ENCODE measurements at regions of chr17 and their contacts with region 1.

Region 1: DNA sequence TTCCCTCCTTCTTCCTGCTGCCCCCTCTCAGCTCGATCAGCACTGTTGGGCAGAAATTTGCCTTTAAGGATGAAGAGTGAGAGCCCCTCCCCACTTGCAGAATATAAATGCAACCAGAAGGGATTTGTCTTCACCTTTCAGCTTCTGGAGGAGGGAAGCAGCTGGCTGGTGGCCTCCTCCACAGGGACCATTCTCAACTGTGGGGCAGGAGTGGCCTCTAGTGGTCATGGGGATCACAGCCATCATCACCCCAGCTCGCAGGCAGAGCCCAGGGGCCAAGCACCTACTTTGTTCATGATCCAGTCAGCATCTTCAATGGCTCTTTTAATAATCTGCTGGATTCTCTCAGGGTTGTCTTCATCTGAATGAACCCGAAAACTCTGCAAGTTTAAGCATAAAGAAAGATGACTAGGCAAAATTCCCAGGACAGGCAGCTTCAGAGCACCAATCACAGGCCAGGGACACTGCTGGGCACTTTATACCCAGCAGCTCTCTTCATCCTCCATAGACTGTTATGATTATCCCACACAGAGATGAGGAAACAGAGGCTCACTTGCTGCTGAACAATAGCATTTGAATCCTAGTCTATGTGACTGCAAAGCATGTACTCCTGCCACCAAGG is 13.1 kb downstream of the LYRM9 start:
- DNase-seq: peak; percentile 84
- H3K4me3 ChIP-seq: no peak overlapping the region
- H3K27ac ChIP-seq: no peak overlapping the region
- H3K4me1 ChIP-seq: peaks cover 0 to 9% (median 0%) of the 10 kb centered on the region in 4 donors
- H3K27me3 ChIP-seq: no peaks in the 10 kb centered on the region
- CTCF ChIP-seq: peak; percentile 64 to 86 (median 77)
- EP300 ChIP-seq: no peak
- POLR2A ChIP-seq: no peak

Region 2: DNA sequence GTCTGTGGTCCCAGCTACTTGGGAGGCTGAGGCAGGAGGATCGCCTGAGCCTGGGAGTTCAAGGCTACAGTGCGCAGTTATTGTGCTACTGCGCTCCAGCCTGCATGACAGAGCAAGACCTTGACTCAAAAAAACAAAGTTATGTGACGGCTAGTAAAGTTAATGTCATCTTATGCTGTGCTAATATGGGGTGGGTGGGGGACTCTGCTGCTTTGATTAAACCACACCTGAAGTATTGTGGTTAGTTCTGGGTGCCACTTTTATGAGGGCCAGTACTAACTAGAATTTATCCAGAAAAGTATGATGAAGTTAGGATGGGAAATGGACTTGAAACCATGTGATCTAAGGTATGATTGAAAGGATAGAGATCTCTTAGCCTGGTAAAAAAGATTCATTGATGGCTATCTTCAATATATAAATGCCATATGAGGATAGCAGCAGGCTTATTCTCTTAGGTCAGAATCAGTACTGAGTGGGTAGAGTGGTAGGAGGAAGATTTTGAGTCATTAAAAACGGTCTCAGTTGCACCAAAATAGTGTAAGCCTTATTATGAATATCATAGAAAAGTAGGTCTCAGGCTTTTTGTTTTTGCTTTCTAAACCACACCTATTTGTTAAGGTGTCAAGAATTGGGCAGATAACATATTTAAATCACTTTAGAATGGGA is 580.6 kb before region 1 on chr17:
- in situ Hi-C with region 1: no loop called
- intact Hi-C with region 1: no loop called
- DNase-seq: no peak
- H3K4me3 ChIP-seq: no peak overlapping the region
- H3K27ac ChIP-seq: peak overlapping the region; percentile 0 to 18 (median 8)
- H3K4me1 ChIP-seq: peaks cover 36 to 82% (median 43%) of the 10 kb centered on the region in 4 donors
- H3K27me3 ChIP-seq: no peaks in the 10 kb centered on the region
- CTCF ChIP-seq: no peak
- EP300 ChIP-seq: no peak
- POLR2A ChIP-seq: no peak

Region 3: DNA sequence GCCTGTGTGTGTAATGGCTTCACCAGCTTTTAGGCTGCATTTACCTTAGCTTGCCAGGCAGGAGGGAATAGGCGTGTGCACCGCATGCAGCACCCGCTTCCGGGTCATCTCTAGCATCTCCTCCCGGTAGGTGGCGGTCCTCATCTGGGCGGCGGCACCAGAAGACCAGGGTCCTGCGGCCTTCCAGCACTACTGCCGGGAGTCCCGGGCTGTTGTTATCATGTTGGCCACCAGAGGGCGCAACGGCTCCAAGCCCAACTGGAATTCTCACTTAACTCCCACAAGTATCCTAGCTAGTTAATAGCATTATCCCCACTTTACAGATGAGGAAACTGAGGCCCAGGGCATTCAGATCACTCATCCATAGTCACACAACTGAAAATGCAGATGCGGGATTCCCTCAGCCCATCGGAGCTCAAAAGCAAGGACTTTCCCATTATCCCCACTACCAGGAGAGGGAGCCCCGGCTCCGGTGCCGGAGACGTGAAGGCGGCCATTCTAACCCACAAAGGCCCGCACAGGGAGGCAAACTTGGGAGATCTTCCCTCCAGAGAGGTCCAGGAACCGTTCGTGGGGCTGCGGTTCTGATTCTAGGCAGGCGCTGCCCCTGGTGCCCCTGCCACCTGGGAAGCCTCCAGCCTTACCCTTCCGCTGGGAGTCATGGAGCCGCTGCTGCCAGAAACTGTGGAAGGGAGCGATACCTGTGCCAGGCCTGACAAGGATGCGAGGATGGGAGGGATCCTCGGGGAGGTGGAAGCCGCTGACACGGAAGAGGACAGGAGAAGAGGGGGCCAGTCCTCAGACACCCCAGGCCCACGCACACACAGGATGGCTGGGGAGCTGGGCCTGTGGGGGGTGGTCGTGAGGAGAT is 225.2 kb before region 1 on chr17:
- in situ Hi-C with region 1: loop called in 1 of 4 experiments (anchors 5 kb)
- intact Hi-C with region 1: no loop called
- DNase-seq: peak; percentile 79
- H3K4me3 ChIP-seq: no peak overlapping the region
- H3K27ac ChIP-seq: no peak overlapping the region
- H3K4me1 ChIP-seq: no peaks in the 10 kb centered on the region
- H3K27me3 ChIP-seq: no peaks in the 10 kb centered on the region
- CTCF ChIP-seq: peak; percentile 90 to 97 (median 94)
- EP300 ChIP-seq: no peak
- POLR2A ChIP-seq: no peak

Region 4: GRCh38 chr17:27760069-27760885 is 119.8 kb before region 1 on chr17:
- in situ Hi-C with region 1: loop called in 1 of 4 experiments (anchors 10 kb)
- intact Hi-C with region 1: no loop called
- DNase-seq: peak; percentile 69
- H3K4me3 ChIP-seq: no peak overlapping the region
- H3K27ac ChIP-seq: no peak overlapping the region
- H3K4me1 ChIP-seq: no peaks in the 10 kb centered on the region
- H3K27me3 ChIP-seq: no peaks in the 10 kb centered on the region
- CTCF ChIP-seq: peak; percentile 83 to 94 (median 90)
- EP300 ChIP-seq: no peak
- POLR2A ChIP-seq: no peak

Region 5: DNA sequence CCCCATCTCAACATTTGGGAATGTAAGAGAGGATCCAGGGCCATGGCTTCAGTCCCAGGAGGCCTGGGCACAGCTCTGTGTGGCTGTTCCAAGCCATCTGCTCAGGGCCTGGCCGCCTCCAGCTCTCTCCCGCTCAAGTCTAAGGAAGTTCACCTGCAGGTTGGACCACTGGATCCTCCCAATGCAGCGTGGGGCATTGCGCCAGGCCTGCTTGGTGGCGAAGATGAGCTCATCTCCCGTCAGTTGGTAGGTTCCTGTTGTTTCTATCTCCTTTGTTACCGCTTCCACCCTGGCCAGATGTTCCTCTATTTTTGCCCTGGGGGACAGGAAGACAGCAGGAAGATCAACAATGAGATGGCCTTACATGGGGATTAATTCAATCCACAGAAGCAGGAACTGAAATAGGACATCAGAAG is 97.3 kb before region 1 on chr17:
- in situ Hi-C with region 1: loop called in 1 of 4 experiments (anchors 10 kb)
- intact Hi-C with region 1: no loop called
- DNase-seq: no peak
- H3K4me3 ChIP-seq: no peak overlapping the region
- H3K27ac ChIP-seq: no peak overlapping the region
- H3K4me1 ChIP-seq: no peaks in the 10 kb centered on the region
- H3K27me3 ChIP-seq: no peaks in the 10 kb centered on the region
- CTCF ChIP-seq: no peak
- EP300 ChIP-seq: no peak
- POLR2A ChIP-seq: no peak

Region 6: DNA sequence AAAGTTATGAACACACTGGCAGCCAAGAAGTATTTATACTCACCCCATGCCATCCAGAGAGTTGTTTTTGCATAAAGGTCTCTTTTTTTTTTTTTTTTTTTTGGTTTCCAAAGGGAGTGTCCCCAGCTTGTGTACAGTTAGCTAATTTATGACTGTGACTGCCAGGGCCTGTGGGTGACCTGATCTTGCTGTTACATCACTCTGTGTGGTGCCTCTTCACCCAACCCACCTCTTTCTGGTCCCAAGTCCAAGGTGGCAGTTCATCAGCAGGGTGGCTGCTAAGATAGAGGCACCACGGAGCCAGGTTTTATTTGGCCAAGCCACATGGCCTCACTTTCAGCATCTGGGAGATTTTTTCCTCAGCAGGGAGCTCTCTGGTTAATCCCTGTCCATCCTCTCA is 79.6 kb before region 1 on chr17 and contains the start of gene NOS2:
- in situ Hi-C with region 1: loop called in 3 of 4 experiments (anchors 10 kb)
- intact Hi-C with region 1: loop called (anchors 5 kb)
- DNase-seq: peak; percentile 50
- H3K4me3 ChIP-seq: no peak within 1 kb of the TSS
- H3K27ac ChIP-seq: peak within 1 kb of the TSS in 3 of 4 donors; percentile 7 to 39 (median 21)
- H3K4me1 ChIP-seq: peaks cover 0 to 8% (median 0%) of the 10 kb centered on the region in 4 donors
- H3K27me3 ChIP-seq: peaks cover 7% of the 10 kb centered on the region
- CTCF ChIP-seq: no peak
- EP300 ChIP-seq: no peak
- POLR2A ChIP-seq: no peak
- total RNA-seq, gene NOS2: 0.40 to 20.3 (median 2.2) TPM

Region 7: DNA sequence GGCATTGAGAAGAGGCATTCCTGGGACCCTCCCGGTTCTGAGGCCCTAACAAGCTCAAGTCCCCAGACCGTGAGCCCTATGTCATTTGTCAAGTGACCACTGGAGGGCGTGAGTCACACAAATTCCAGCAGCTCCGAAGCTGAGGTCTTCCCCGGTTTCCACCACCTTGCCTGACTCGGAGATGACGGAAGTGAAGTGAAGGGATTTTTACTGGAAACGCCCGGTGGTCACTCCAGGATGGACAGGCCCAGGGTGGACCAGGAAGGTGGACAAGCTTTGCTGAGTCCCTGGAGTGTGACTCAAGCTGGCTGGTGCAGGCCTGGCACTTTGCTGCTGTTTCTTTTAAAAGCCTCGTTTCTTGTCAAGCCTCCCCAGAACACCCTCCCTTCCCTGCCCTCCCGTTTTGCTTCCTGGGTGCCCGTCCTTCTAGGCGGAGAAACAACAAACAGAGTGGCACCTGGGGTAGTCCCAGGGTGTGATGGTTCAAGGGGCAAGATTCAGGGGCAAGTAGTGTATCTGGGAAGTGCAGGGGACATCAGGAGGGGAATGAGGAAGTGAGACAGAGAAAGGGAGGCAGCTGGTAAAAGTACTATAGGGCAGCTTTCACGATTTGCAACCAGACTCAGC is 74.5 kb before region 1 on chr17:
- in situ Hi-C with region 1: loop called in 3 of 4 experiments (anchors 10 kb)
- intact Hi-C with region 1: loop called (anchors 5 kb)
- DNase-seq: peak; percentile 89
- H3K4me3 ChIP-seq: peak overlapping the region in 2 of 4 donors; percentile 12 to 35
- H3K27ac ChIP-seq: peak overlapping the region; percentile 46 to 60 (median 58)
- H3K4me1 ChIP-seq: peaks cover 5 to 34% (median 19%) of the 10 kb centered on the region in 4 donors
- H3K27me3 ChIP-seq: no peaks in the 10 kb centered on the region
- CTCF ChIP-seq: peak; percentile 82 to 96 (median 85)
- EP300 ChIP-seq: no peak
- POLR2A ChIP-seq: no peak

Measured in transverse colon (tissue), 4 donors.